ENCODE measurements at regions of chr3 and their contacts with region 1.

Region 1: GRCh38 chr3:14791343-14791945 is 27.3 kb upstream of the FGD5 start:
- H3K4me3 ChIP-seq: no peak overlapping the region
- H3K27ac ChIP-seq: no peak overlapping the region
- H3K4me1 ChIP-seq: no peaks in the 10 kb centered on the region
- CTCF ChIP-seq: peak; percentile 89

Region 2: GRCh38 chr3:14814488-14814887 is 23.0 kb after region 1 on chr3:
- CTCF ChIA-PET with region 1: interaction called, 14 read pairs
- POLR2A ChIA-PET with region 1: no interaction called
- H3K4me3 ChIP-seq: no peak overlapping the region
- H3K27ac ChIP-seq: no peak overlapping the region
- H3K4me1 ChIP-seq: no peaks in the 10 kb centered on the region
- CTCF ChIP-seq: no peak

Region 3: DNA sequence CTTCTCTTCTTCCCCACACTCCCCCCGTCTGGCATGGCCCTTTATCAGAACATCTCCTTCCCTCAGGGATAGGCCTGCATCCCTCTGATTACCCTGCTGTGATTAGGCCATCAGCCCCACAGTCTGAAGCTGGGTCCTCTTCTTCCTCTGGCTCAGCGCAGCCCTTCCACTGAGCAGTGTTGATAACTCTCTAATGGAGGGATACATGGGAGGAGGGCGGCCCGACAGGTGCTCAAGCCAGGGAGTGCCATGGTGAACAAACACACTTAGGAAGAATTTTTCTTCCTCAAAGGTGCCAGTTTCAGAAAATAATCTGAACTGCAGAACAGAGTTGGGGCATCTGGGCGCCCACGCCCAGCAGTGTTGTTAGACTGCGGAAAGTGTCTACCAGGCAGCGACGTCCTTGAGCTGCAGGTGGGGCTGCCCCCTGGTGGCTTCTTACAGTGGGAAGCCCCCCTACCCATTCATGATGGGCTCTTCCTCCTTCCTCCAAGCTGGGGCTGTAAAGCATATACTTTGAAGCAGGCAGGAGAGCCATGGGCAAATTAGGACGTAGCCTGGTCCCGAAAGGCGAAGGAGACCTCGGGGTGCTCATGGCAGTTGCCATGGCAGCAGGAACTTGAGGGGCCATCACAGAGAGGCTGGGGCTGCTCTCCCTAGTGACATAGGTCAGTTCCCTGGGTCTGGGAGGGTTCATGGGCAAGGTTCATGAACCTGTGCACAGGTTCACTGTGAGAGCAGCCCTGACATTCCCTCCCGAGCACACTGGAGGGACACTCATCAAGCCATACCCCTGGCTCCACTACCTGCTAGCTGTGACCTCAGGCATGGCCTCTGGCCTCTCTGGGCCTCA is 122.7 kb after region 1 on chr3:
- CTCF ChIA-PET with region 1: interaction called, 17 read pairs
- POLR2A ChIA-PET with region 1: no interaction called
- H3K4me3 ChIP-seq: no peak overlapping the region
- H3K27ac ChIP-seq: no peak overlapping the region
- H3K4me1 ChIP-seq: no peaks in the 10 kb centered on the region
- CTCF ChIP-seq: no peak

Region 4: DNA sequence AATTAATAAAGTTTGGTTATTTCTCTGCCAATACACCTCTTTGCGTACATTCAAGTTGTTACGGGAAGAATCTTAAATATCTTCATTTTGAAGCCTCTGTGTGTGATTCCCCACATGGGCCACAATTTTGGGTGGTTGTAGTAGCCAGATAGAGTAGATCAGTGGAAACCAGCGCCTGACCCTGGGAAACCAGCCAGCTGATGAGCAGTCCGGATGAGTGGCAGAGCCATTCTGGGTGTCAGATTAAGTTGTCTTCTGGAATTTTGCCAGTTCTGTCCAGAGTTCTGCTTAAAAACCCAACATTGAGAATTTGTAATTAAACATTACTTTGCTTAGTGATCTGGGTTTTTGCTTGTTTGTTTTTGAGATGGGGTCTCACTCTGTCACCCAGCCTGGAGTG is 224.0 kb after region 1 on chr3:
- CTCF ChIA-PET with region 1: no interaction called
- POLR2A ChIA-PET with region 1: no interaction called
- H3K4me3 ChIP-seq: no peak overlapping the region
- H3K27ac ChIP-seq: no peak overlapping the region
- H3K4me1 ChIP-seq: no peaks in the 10 kb centered on the region
- CTCF ChIP-seq: no peak

Measured in HEK293 (cell line).